Activated CD4-positive, alpha-beta T cell treated with anti-CD3 and anti-CD28 coated beads for 36 hours (primary cell): ENCODE measurements at regions of chr11 and their contacts with region 1.

Region 1: DNA sequence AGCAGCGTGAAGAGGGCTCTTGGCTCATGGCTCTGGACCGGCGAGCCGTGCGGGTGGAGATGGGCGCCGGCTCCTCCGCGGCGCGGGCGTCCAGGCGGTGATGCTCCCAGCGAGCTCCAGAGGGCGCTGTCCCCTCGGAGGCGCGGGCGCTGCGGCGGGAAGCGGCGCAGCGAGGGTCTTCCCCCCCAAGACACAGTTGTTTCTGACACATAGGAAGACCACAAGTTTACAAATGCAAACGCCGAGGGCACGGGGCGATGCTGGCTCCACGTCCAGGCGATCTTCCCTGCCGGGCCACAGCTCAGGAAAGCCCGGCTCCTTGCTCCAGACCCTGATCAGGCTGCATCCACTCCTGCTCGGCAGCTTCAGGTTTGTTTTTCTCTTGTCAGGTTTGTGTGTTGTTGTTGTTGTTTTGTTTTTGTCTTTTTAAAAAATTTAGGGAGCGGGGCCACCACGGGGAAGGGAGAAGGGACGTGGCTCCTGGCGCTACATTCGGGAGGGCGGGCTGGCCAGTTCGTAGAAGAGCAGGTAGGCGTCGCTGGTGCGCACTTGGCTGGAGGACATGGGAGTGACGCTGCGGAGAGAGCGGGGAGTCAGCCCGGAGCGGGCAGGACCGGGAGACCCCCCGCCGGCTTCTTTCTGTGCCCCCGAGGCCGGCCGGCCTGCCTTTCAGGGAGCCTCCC is 10.0 kb upstream of the MFRP start:
- DNase-seq: peak; percentile 89
- ATAC-seq: peak; percentile 80
- H3K4me3 Mint-ChIP-seq: peak overlapping the region; percentile 70
- H3K27ac Mint-ChIP-seq: peak overlapping the region; percentile 70
- H3K4me1 Mint-ChIP-seq: peaks cover 17% of the 10 kb centered on the region
- H3K27me3 Mint-ChIP-seq: peaks cover 29% of the 10 kb centered on the region

Region 2: DNA sequence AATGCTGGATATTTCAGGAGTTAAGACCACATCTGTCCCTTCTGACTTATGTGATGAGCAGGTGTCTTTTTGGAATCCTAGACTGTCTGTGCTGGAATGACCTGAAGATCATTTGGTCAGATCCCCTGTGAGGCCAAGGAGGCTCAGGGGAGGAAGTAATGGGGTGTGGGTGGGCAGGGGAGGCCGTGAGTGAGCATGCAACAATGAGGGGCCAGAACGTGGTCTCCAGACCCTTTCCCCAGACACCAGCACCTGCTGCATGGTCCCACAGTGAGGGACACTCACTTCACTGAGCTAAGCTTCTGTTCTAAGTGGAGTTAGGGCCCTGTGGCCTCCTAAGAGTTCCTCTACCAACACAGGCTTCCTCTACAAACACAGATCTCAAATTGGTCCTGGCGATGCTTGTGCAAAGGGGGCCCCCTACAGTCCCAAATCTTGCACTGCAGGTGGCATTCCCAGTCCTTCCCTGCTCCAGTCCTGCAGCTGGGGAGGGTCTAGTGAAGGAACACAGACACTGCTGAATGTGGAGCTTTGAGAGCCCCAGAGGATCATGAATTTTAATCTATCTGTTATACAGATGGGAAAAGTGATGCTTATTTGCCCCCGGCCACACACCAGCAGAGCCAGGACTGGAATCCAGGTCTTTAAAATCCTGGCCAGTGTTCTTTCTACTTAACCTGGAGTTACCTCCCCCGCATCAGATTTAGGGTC is 17.6 kb after region 1 on chr11:
- CTCF ChIA-PET with region 1: interaction called, 153 read pairs
- POLR2A ChIA-PET with region 1: no interaction called
- intact Hi-C with region 1: loop called (anchors 1 kb)
- DNase-seq: peak; percentile 71
- ATAC-seq: peak; percentile 55
- H3K4me3 Mint-ChIP-seq: no peak overlapping the region
- H3K27ac Mint-ChIP-seq: no peak overlapping the region
- H3K4me1 Mint-ChIP-seq: peaks cover 6% of the 10 kb centered on the region
- H3K27me3 Mint-ChIP-seq: peaks cover 2% of the 10 kb centered on the region

Region 3: DNA sequence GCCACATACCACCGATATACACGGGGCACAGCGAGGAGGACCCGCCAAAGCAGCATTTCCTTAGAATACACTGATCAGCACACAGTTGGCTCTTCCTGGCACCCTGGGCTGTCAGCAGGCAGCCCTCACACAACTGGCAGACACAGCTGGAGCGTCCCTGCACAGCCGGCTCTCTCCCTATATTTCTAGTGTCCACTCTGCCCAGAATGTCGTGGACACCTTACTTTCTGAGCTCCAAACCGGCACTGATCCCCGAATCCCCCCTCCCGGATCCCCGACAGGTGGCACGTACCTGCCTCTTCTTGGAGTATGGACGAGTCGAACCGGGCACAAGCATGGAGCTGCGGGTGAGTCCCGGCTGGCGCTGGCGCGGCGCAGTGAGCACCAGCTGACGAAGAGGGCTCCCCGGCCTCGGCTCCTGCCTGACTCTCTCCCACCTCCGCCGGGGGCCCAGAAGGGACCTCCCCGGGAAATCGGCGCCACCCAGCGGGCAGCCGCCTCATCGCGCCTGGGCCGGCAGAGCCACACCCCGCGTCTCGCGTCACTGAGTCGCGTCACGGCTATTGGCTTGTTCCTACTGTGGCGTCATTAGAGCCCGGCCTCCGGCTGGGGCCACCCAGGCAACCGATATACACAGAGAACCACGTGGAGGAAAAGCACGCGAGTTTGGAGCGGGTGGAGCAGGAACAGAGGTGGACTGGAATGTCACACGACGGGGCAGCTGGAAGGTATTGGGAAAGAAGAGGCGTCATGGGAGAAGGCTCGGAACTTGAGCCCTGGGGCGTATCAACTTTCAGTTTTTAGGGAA is 24.9 kb after region 1 on chr11 and contains the start of gene USP2:
- CTCF ChIA-PET with region 1: interaction called, 153 read pairs
- POLR2A ChIA-PET with region 1: interaction called, 3 read pairs
- intact Hi-C with region 1: loop called in 1 of 2 experiments (anchors 1 kb)
- DNase-seq: peak; percentile 98
- ATAC-seq: peak; percentile 98
- H3K4me3 Mint-ChIP-seq: no peak within 1 kb of the TSS
- H3K27ac Mint-ChIP-seq: peak within 1 kb of the TSS; percentile 18
- H3K4me1 Mint-ChIP-seq: peaks cover 7% of the 10 kb centered on the region
- H3K27me3 Mint-ChIP-seq: no peaks in the 10 kb centered on the region
- total RNA-seq, gene USP2: 0.58 to 0.71 TPM

Region 4: GRCh38 chr11:119388103-119388502 is 31.6 kb after region 1 on chr11:
- CTCF ChIA-PET with region 1: interaction called, 153 read pairs
- POLR2A ChIA-PET with region 1: no interaction called
- intact Hi-C with region 1: no loop called
- DNase-seq: no peak
- ATAC-seq: no peak
- H3K4me3 Mint-ChIP-seq: no peak overlapping the region
- H3K27ac Mint-ChIP-seq: no peak overlapping the region
- H3K4me1 Mint-ChIP-seq: no peaks in the 10 kb centered on the region
- H3K27me3 Mint-ChIP-seq: peaks cover 3% of the 10 kb centered on the region

Region 5: GRCh38 chr11:119474682-119475596 is 118.4 kb after region 1 on chr11:
- CTCF ChIA-PET with region 1: interaction called, 44 read pairs
- POLR2A ChIA-PET with region 1: interaction called, 5 read pairs
- intact Hi-C with region 1: loop called (anchors 1 kb)
- DNase-seq: peak; percentile 77
- ATAC-seq: peak; percentile 83
- H3K4me3 Mint-ChIP-seq: no peak overlapping the region
- H3K27ac Mint-ChIP-seq: no peak overlapping the region
- H3K4me1 Mint-ChIP-seq: no peaks in the 10 kb centered on the region
- H3K27me3 Mint-ChIP-seq: peaks cover 21% of the 10 kb centered on the region